ENCODE measurements at regions of chr15 and their contacts with region 1.

Region 1: DNA sequence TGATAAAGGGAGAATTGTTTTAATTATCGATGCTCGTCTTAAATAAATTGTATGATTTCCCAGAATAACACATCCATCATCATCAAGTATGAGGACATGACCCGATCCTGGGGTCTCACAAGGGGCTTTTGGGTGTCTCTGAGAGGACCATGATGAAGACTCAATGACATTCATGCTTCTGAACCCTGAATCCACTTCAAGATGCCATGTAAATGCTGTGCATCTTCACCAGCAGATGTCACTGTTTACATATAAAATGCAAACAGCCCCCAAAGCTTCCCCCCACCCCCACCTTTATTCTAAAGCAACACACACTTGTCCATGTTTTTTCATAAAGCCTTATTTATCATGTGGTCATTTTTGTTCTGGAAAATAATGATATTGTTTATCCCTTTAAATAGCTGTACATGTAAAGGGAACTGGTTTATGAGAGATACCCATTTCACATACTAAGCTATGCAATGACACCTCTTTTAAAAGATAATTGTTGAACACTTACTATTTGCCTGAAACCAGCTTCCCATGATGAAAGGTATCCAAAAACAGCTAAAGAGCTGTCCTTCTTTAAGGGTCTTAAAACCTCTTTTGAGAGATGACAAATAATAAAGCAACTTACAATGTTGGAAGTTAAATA is 69.7 kb upstream of the UBE3A start:
- DNase-seq: no peak
- ATAC-seq: peak in 1 of 2 donors; percentile 37
- H3K4me3 ChIP-seq: no peak overlapping the region
- H3K27ac ChIP-seq: no peak overlapping the region
- H3K4me1 ChIP-seq: no peaks in the 10 kb centered on the region
- H3K27me3 ChIP-seq: no peaks in the 10 kb centered on the region

Region 2: DNA sequence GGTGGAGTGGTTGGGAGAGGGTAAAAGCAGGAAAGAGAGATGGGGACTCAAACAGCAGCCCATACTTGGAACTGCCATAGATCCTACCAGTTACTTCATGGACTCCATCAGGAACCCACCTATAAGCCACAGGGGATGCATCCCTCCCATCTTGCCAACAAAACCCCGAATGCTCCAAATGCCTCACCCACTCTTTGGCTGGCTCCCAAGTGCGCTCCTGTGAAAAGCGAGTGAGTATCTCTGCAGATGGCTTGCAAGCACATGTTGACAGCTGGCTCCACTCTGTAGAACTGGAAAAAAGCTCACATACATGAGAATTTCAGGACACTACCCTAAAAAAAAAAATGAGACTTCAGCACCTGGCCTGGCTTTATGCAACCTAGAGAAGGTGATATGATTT is 220.7 kb before region 1 on chr15:
- intact Hi-C with region 1: no loop called
- DNase-seq: no peak
- ATAC-seq: no peak
- H3K4me3 ChIP-seq: no peak overlapping the region
- H3K27ac ChIP-seq: no peak overlapping the region
- H3K4me1 ChIP-seq: no peaks in the 10 kb centered on the region
- H3K27me3 ChIP-seq: no peaks in the 10 kb centered on the region

Region 3: DNA sequence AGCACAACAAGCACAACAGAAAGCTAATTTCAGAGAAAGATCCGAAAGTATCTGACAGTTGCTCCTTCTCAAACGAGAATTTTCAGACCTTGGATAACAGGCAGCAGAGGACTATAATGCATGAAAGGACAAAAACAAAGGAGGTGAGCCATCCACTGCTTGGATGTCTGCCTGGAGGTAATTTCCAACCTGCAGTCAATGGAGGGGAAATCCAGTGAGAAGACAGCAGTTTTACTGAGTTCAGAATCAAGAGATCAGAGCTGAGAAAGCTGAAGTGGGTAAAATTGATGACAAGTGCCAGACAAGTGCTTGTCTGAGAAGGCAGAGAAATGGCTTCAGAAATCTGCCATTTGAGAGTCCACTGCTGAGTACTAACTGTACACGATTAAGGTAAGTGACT is 91.8 kb before region 1 on chr15:
- intact Hi-C with region 1: no loop called
- DNase-seq: no peak
- ATAC-seq: no peak
- H3K4me3 ChIP-seq: no peak overlapping the region
- H3K27ac ChIP-seq: no peak overlapping the region
- H3K4me1 ChIP-seq: peaks cover 1% of the 10 kb centered on the region
- H3K27me3 ChIP-seq: no peaks in the 10 kb centered on the region

Region 4: DNA sequence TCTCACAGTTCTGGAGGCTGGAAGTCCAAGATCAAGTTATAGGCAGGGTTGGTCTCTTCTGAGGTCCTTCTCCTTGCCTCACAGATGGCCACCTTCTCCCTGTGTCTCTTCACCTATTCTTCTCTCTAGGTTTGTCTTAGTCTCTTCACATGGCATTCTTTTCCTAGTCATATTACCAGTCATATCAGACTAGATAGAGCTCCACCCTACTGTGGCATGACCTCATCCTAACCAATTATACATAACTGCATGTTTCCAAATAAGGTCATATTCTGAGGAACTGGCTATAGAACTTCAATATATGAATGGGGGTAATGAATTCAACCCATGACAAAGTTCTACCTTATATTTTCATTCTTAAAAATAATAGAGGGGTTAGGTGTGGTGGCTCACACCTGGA is 126.7 kb after region 1 on chr15:
- intact Hi-C with region 1: no loop called
- DNase-seq: no peak
- ATAC-seq: no peak
- H3K4me3 ChIP-seq: no peak overlapping the region
- H3K27ac ChIP-seq: no peak overlapping the region
- H3K4me1 ChIP-seq: no peaks in the 10 kb centered on the region
- H3K27me3 ChIP-seq: no peaks in the 10 kb centered on the region

Region 5: GRCh38 chr15:25693321-25694237 is 185.1 kb after region 1 on chr15:
- intact Hi-C with region 1: loop called in 2 of 4 experiments (anchors 5 to 10 kb)
- DNase-seq: peak; percentile 43 to 75 (median 73)
- ATAC-seq: peak; percentile 50 to 67
- H3K4me3 ChIP-seq: no peak overlapping the region
- H3K27ac ChIP-seq: no peak overlapping the region
- H3K4me1 ChIP-seq: no peaks in the 10 kb centered on the region
- H3K27me3 ChIP-seq: no peaks in the 10 kb centered on the region

Region 6: DNA sequence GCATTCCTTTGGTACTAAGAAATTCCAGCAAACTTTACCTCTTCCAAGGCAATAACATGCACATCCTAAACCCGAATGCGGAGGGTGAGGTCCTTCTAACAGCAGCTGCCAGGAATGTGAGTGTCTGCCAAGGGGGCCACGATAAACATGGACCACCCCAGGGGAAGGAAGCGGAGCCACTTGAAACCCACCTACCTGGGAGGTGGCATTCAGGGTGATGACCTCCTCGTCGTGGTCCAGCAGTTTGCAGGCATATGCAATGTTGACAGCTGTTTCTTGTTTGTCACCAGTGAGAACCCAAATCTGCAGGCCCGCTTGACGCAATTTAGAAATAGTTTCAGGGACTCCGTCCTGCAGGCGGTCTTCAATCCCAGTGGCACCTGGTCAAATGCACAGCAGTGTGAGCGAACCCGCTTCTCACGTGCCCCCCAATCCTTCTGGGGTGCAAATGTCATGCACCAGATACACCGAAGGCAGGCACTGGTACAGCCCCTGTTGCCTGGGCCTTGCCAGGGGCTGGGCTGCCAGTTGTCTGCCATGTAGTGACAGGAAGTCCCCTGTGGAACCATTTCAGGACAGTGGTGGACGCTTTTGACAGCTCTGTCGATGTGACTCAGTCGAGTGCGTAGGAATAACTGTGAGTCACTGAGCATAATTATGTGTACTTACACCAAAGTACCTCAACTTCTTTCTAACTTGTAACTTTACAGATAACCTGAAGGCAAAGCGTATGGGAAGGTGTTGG is 193.4 kb after region 1 on chr15:
- intact Hi-C with region 1: loop called in 2 of 4 experiments (anchors 10 kb)
- DNase-seq: no peak
- ATAC-seq: no peak
- H3K4me3 ChIP-seq: no peak overlapping the region
- H3K27ac ChIP-seq: no peak overlapping the region
- H3K4me1 ChIP-seq: no peaks in the 10 kb centered on the region
- H3K27me3 ChIP-seq: no peaks in the 10 kb centered on the region

Region 7: GRCh38 chr15:25933456-25934158 is 425.1 kb after region 1 on chr15:
- intact Hi-C with region 1: loop called in 3 of 4 experiments (anchors 10 kb)
- DNase-seq: peak; percentile 81 to 92 (median 86)
- ATAC-seq: peak; percentile 94 to 95
- H3K4me3 ChIP-seq: peak overlapping the region; percentile 21
- H3K27ac ChIP-seq: no peak overlapping the region
- H3K4me1 ChIP-seq: no peaks in the 10 kb centered on the region
- H3K27me3 ChIP-seq: no peaks in the 10 kb centered on the region

Region 8: GRCh38 chr15:26864664-26865191 is 1356.2 kb after region 1 on chr15:
- intact Hi-C with region 1: loop called in 2 of 4 experiments (anchors 5 to 10 kb)
- DNase-seq: peak in 1 of 3 donors; percentile 63
- ATAC-seq: peak; percentile 62 to 76
- H3K4me3 ChIP-seq: no peak overlapping the region
- H3K27ac ChIP-seq: no peak overlapping the region
- H3K4me1 ChIP-seq: no peaks in the 10 kb centered on the region
- H3K27me3 ChIP-seq: no peaks in the 10 kb centered on the region

Measured in right cardiac atrium (tissue), 5 donors.